WTC11 (cell line): ENCODE measurements at regions of chr9 and their contacts with region 1.

Region 1: GRCh38 chr9:22008736-22009562 is at the start of gene CDKN2B:
- DNase-seq: peak; percentile 96
- ATAC-seq: peak; percentile 84
- H3K4me3 Mint-ChIP-seq: peak within 1 kb of the TSS; percentile 91
- H3K27ac Mint-ChIP-seq: no peak within 1 kb of the TSS
- H3K4me1 Mint-ChIP-seq: peaks cover 26% of the 10 kb centered on the region
- H3K27me3 Mint-ChIP-seq: peaks cover 90% of the 10 kb centered on the region
- CTCF ChIP-seq: peak; percentile 92
- total RNA-seq, gene CDKN2B: 0.13 to 0.73 TPM (median 0.46 TPM) in 3 replicates

Region 2: GRCh38 chr9:21812946-21813568 is 195.9 kb before region 1 on chr9:
- CTCF ChIA-PET with region 1: interaction called, 11 read pairs
- POLR2A ChIA-PET with region 1: no interaction called
- DNase-seq: peak; percentile 73
- ATAC-seq: peak; percentile 75
- H3K4me3 Mint-ChIP-seq: no peak overlapping the region
- H3K27ac Mint-ChIP-seq: no peak overlapping the region
- H3K4me1 Mint-ChIP-seq: peaks cover 3% of the 10 kb centered on the region
- H3K27me3 Mint-ChIP-seq: no peaks in the 10 kb centered on the region
- CTCF ChIP-seq: peak; percentile 91

Region 3: DNA sequence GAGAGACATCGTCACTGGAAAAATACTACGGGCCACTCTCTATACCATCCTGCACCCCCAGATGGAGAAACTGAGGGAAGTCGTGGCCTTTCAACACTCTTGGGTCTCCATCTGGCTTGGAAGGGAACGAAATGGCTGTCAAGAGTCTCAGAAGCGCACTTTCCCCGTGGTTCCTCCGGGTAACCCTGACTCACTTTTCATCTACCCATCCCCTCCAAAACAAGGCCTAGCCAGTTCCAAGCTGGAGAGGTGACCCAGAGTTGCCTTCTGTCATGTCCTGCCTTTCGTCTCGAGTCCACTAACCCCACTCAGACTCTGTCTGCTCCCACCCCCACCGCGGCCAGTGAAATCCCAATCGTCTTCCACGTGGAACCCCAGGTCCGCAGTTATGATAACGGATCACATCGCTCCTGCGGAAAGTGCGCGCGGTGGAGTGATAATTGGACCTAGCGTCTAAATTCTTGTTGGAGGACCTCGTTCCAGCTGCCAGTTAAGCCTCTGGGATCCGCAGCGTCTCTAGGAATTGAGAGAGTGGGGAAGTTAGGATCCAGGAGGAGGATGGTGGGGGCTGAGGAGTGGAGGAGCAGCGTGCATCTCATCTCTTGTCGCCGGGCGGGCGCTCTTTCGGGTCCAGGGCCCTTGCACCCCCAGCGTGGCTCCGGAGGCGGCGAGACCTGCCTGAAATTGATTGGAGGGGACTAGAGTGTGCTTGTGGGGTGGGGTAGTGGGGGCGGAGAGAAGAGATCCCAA is 19.3 kb before region 1 on chr9:
- CTCF ChIA-PET with region 1: interaction called, 42 read pairs
- POLR2A ChIA-PET with region 1: interaction called, 5 read pairs
- DNase-seq: peak; percentile 36
- ATAC-seq: peak; percentile 60
- H3K4me3 Mint-ChIP-seq: peak overlapping the region; percentile 52
- H3K27ac Mint-ChIP-seq: no peak overlapping the region
- H3K4me1 Mint-ChIP-seq: peaks cover 26% of the 10 kb centered on the region
- H3K27me3 Mint-ChIP-seq: peaks cover 98% of the 10 kb centered on the region
- CTCF ChIP-seq: no peak

Region 4: GRCh38 chr9:22060831-22061383 is 52.0 kb after region 1 on chr9:
- CTCF ChIA-PET with region 1: no interaction called
- POLR2A ChIA-PET with region 1: no interaction called
- DNase-seq: no peak
- ATAC-seq: no peak
- H3K4me3 Mint-ChIP-seq: no peak overlapping the region
- H3K27ac Mint-ChIP-seq: no peak overlapping the region
- H3K4me1 Mint-ChIP-seq: no peaks in the 10 kb centered on the region
- H3K27me3 Mint-ChIP-seq: no peaks in the 10 kb centered on the region; the same call in none of the 2 replicates
- CTCF ChIP-seq: no peak

Region 5: DNA sequence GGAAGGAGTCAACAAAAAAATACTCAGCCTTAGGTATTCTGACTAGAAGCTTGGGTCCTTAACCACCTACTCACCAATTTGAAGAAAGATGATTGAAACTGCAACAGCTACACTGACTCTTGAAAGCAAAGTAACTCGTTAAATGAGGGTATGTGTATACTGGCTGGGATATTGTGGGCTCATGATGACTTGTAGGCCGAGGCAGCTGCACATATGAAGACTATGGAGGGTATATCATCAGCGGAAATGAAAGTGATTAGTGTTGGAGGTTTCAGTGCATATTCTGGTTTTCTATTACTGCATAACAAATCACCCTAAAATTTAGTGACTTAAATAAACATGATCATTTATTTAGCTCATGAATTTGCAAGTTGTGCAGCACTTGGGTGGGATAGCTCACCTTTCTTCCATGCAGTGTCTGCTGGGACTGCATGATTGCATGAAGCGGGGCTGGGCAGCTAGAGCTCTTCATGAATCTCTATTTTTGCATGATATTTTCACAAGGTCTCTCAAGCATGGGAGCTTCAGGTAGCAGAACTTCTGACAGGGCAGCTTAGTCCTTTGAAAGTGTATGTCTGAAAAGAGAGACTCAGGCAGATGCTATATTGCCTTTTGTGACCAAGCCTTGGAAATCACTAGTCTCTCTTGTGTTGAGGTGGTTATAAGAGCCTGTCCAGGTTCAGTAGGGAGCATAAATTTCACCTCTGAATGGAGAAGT is 96.2 kb after region 1 on chr9:
- CTCF ChIA-PET with region 1: interaction called, 13 read pairs
- POLR2A ChIA-PET with region 1: no interaction called
- DNase-seq: no peak
- ATAC-seq: no peak
- H3K4me3 Mint-ChIP-seq: no peak overlapping the region
- H3K27ac Mint-ChIP-seq: no peak overlapping the region
- H3K4me1 Mint-ChIP-seq: peaks cover 22% of the 10 kb centered on the region
- H3K27me3 Mint-ChIP-seq: no peaks in the 10 kb centered on the region
- CTCF ChIP-seq: no peak

Region 6: GRCh38 chr9:22238809-22239684 is 230.1 kb after region 1 on chr9:
- CTCF ChIA-PET with region 1: interaction called, 20 read pairs
- POLR2A ChIA-PET with region 1: no interaction called
- DNase-seq: no peak
- ATAC-seq: peak; percentile 78
- H3K4me3 Mint-ChIP-seq: no peak overlapping the region
- H3K27ac Mint-ChIP-seq: 0 out of 2 replicates have a peak overlapping the region, but pooled peaks have one; percentile 35
- H3K4me1 Mint-ChIP-seq: peaks cover 17% of the 10 kb centered on the region
- H3K27me3 Mint-ChIP-seq: no peaks in the 10 kb centered on the region
- CTCF ChIP-seq: no peak

Region 7: GRCh38 chr9:22374051-22374450 is 365.1 kb after region 1 on chr9:
- CTCF ChIA-PET with region 1: no interaction called
- POLR2A ChIA-PET with region 1: no interaction called
- DNase-seq: no peak
- ATAC-seq: peak; percentile 78
- H3K4me3 Mint-ChIP-seq: no peak overlapping the region
- H3K27ac Mint-ChIP-seq: 0 out of 2 replicates have a peak overlapping the region, but pooled peaks have one; percentile 16
- H3K4me1 Mint-ChIP-seq: peaks cover 15% of the 10 kb centered on the region
- H3K27me3 Mint-ChIP-seq: no peaks in the 10 kb centered on the region
- CTCF ChIP-seq: no peak